ENCODE measurements at regions of chr2 and their contacts with region 1.

Region 1: GRCh38 chr2:64914735-64915509 is 74.3 kb upstream of the SLC1A4 start:
- DNase-seq: no peak
- ATAC-seq: no peak
- H3K4me3 ChIP-seq: no peak overlapping the region
- H3K27ac ChIP-seq: no peak overlapping the region
- H3K4me1 ChIP-seq: peaks cover 0 to 4% (median 0%) of the 10 kb centered on the region in 3 donors
- H3K27me3 ChIP-seq: no peaks in the 10 kb centered on the region
- CTCF ChIP-seq: no peak

Region 2: DNA sequence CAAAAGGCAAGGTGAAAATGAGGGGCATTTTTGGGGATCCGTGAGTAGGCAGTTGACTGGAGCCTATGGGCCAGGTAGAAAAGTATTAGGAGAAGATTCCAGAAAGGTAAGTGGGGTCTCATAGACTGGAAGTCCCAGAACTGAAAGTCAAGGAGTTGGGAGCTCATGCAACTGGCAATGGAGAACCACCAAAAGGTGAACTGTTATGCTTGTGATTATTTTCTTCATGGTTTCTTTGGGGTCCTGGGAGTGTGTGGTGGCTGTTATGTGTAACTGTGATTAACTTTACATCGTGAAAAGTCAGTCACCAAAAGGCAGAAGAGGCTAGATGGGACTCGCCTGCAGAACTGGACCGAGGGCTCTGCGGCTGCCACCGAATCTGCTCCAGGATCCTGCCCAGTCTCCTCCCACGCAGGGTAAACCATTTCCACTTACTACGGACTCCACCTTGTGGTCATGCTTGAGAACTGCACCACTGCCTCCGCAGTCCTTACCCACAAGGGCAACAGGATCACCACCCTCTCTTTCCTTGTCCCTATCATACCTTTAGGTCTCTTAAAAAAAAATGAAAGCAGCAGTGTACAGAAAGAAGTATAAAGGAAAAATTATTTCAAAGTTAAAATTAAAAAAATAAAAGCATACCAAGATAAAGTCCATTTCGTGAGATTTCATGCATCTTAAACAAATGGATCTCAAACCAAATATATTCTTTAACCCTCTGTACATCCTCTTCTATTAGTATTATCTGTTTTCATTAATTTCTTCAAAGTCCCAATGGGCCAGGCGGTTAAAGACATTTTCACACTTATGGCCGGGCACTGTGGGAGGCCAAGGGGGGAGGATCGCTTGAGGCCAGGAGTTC is 125.7 kb after region 1 on chr2:
- intact Hi-C with region 1: loop called (anchors 2 to 10 kb)
- DNase-seq: peak; percentile 76 to 91 (median 85)
- ATAC-seq: peak; percentile 96 to 100 (median 99)
- H3K4me3 ChIP-seq: no peak overlapping the region
- H3K27ac ChIP-seq: no peak overlapping the region
- H3K4me1 ChIP-seq: no peaks in the 10 kb centered on the region
- H3K27me3 ChIP-seq: no peaks in the 10 kb centered on the region
- CTCF ChIP-seq: peak; percentile 82 to 95 (median 92)

Region 3: DNA sequence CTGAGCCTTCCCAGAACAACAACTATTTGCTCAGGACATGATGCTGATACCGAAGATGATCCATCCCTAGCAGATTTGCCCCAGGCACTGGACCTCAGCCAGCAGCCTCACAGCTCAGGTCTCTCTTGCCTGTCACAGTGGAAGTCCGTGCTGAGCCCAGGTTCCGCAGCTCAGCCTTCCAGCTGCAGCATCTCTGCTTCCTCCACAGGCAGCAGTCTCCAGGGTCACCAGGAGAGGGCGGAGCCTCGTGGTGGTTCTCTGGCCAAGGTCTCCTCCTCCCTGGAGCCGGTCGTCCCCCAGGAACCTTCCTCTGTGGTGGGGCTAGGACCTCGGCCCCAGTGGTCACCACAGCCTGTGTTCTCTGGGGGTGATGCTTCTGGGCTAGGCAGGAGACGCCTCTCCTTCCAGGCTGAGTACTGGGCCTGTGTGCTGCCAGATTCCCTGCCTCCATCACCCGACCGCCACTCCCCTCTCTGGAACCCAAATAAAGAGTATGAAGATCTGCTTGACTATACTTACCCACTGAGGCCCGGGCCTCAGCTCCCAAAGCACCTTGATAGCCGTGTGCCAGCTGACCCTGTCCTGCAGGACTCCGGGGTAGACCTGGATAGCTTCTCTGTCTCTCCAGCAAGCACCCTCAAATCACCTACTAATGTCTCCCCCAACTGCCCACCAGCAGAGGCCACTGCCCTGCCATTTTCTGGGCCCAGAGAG is 156.7 kb after region 1 on chr2:
- intact Hi-C with region 1: no loop called
- DNase-seq: peak in 4 of 6 donors; percentile 43 to 83 (median 63)
- ATAC-seq: peak; percentile 33 to 65 (median 53)
- H3K4me3 ChIP-seq: no peak overlapping the region
- H3K27ac ChIP-seq: no peak overlapping the region
- H3K4me1 ChIP-seq: peaks cover 0 to 7% (median 7%) of the 10 kb centered on the region in 3 donors
- H3K27me3 ChIP-seq: no peaks in the 10 kb centered on the region
- CTCF ChIP-seq: peak in 2 of 4 donors; percentile 11 to 14

Region 4: GRCh38 chr2:65186872-65187851 is 272.2 kb after region 1 on chr2:
- intact Hi-C with region 1: loop called in 2 of 3 experiments (anchors 10 kb)
- DNase-seq: peak; percentile 66 to 85 (median 74)
- ATAC-seq: peak; percentile 97 to 100 (median 99)
- H3K4me3 ChIP-seq: no peak overlapping the region
- H3K27ac ChIP-seq: no peak overlapping the region
- H3K4me1 ChIP-seq: peaks cover 0 to 3% (median 0%) of the 10 kb centered on the region in 3 donors
- H3K27me3 ChIP-seq: no peaks in the 10 kb centered on the region
- CTCF ChIP-seq: peak; percentile 56 to 73 (median 66)

Measured in pancreas (tissue), 10 donors.